ENCODE measurements at regions of chr3 and their contacts with region 1.

Region 1: GRCh38 chr3:54994101-54994513 is 66.2 kb upstream of the LRTM1 start:
- DNase-seq: no peak
- H3K4me3 ChIP-seq: no peak overlapping the region
- H3K4me3 Mint-ChIP-seq: no peak overlapping the region
- H3K27ac ChIP-seq: no peak overlapping the region
- H3K27ac Mint-ChIP-seq: peak overlapping the region in 1 of 7 donors; percentile 6
- H3K4me1 ChIP-seq: peaks cover 21% of the 10 kb centered on the region in 2 donors
- H3K4me1 Mint-ChIP-seq: peaks cover 25% of the 10 kb centered on the region
- H3K27me3 ChIP-seq: no peaks in the 10 kb centered on the region
- H3K27me3 Mint-ChIP-seq: no peaks in the 10 kb centered on the region
- CTCF ChIP-seq: no peak

Region 2: GRCh38 chr3:54957711-54958110 is 36.4 kb before region 1 on chr3:
- intact Hi-C with region 1: loop called in 1 of 2 experiments (anchors 5 kb)
- DNase-seq: no peak
- H3K4me3 ChIP-seq: no peak overlapping the region
- H3K4me3 Mint-ChIP-seq: no peak overlapping the region
- H3K27ac ChIP-seq: no peak overlapping the region
- H3K27ac Mint-ChIP-seq: no peak overlapping the region
- H3K4me1 ChIP-seq: peaks cover 0 to 3% of the 10 kb centered on the region in 2 donors
- H3K4me1 Mint-ChIP-seq: peaks cover 2% of the 10 kb centered on the region
- H3K27me3 ChIP-seq: no peaks in the 10 kb centered on the region
- H3K27me3 Mint-ChIP-seq: peaks cover 0 to 2% (median 1%) of the 10 kb centered on the region in 3 donors
- CTCF ChIP-seq: no peak

Region 3: GRCh38 chr3:55416351-55416821 is 422.3 kb after region 1 on chr3:
- intact Hi-C with region 1: no loop called
- DNase-seq: no peak
- H3K4me3 ChIP-seq: no peak overlapping the region
- H3K4me3 Mint-ChIP-seq: no peak overlapping the region
- H3K27ac ChIP-seq: no peak overlapping the region
- H3K27ac Mint-ChIP-seq: no peak overlapping the region
- H3K4me1 ChIP-seq: no peaks in the 10 kb centered on the region
- H3K4me1 Mint-ChIP-seq: no peaks in the 10 kb centered on the region
- H3K27me3 ChIP-seq: no peaks in the 10 kb centered on the region
- H3K27me3 Mint-ChIP-seq: peaks cover 0 to 3% (median 2%) of the 10 kb centered on the region in 3 donors
- CTCF ChIP-seq: no peak